Lower leg skin (tissue), 4 donors: ENCODE measurements at regions of chr2 and their contacts with region 1.

Region 1: GRCh38 chr2:197499594-197500526 is at the starts of genes HSPD1 and HSPE1:
- DNase-seq: peak; percentile 99 to 100
- H3K4me3 ChIP-seq: peak within 1 kb of the TSS; percentile 81
- CTCF ChIP-seq: peak in 1 of 3 donors; percentile 100
- POLR2A ChIP-seq: peak in 1 of 2 donors; percentile 42
- total RNA-seq, gene HSPD1: 74.7 to 104 (median 88.9) TPM
- total RNA-seq, gene HSPE1: 39.3 to 70.3 (median 50.7) TPM

Region 2: GRCh38 chr2:197399887-197400540 is 99.8 kb before region 1 on chr2:
- intact Hi-C with region 1: no loop called
- DNase-seq: no peak
- H3K4me3 ChIP-seq: no peak overlapping the region
- CTCF ChIP-seq: no peak
- POLR2A ChIP-seq: no peak

Region 3: DNA sequence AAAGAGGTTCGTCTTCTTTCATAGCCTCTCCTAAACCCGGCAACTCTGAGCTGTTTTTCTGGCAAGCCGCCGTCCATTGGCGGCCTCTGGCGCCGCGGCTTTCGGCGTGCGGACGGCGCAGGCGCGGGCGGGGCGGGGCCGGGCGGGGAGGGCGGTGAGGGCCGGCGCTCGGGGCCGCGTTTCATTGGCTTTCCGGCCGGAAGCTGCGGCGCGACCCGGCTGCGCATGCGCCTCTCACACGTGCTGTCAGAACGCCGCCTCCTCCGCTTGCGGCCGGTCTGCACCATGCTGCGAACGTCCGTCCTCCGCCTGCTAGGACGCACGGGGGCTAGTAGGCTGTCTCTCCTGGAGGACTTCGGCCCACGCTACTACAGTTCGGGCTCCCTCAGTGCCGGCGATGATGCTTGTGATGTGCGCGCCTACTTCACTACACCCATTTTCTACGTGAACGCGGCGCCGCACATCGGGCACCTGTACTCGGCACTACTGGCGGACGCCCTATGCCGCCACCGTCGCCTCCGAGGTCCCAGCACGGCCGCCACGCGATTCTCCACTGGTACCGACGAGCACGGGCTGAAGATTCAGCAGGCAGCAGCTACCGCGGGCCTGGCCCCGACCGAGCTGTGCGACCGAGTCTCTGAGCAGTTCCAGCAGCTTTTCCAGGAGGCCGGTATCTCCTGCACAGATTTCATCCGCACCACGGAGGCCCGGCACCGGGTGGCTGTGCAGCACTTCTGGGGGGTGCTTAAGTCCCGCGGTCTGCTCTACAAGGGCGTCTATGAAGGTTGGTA is 205.5 kb after region 1 on chr2 and contains the start of gene MARS2:
- intact Hi-C with region 1: loop called (anchors 10 kb)
- DNase-seq: peak; percentile 88 to 98
- H3K4me3 ChIP-seq: peak within 1 kb of the TSS; percentile 65
- CTCF ChIP-seq: no peak
- POLR2A ChIP-seq: no peak
- total RNA-seq, gene MARS2: 6.5 to 9.5 (median 9.1) TPM